AG04450 (cell line): ENCODE measurements at regions of chrX and their contacts with region 1.

Region 1: GRCh38 chrX:84729809-84730208 is 227.6 kb upstream of the HDX start:
- DNase-seq: no peak
- H3K4me3 ChIP-seq: no peak overlapping the region
- H3K27ac ChIP-seq: no peak overlapping the region
- H3K27me3 ChIP-seq: no peaks in the 10 kb centered on the region
- CTCF ChIP-seq: peak; percentile 79

Region 2: DNA sequence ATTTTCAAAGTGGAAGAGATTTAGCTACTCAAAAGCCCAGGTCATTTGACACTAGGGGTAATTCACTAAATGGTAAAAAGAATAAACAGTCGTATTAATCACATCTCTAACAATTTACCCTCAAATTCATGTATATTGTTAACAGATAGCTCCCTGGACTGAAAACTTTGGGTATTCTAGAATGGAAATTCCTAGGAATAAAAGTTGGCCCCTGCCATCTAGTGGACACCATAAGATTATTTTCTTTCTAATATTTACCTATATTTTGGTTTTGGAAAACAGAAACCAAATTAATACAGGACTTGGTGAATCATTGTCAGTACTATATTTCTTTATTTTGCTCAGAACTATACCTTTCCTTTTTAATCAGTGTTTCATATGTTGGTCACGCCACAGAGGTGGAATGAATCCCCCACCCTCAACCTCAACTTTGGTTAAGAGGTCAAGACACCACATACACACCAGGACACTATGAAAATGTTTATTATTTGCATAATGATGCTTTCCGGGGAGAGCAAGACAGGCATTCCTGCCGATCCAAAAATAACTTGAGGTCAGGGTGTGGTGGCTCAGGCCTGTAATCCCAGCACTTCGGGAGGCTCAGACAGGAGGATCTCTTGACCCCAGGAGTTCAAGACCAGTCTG is 177.6 kb after region 1 on chrX:
- CTCF ChIA-PET with region 1: interaction called, 27 read pairs
- POLR2A ChIA-PET with region 1: no interaction called
- DNase-seq: no peak
- H3K4me3 ChIP-seq: no peak overlapping the region
- H3K27ac ChIP-seq: no peak overlapping the region
- H3K27me3 ChIP-seq: no peaks in the 10 kb centered on the region
- CTCF ChIP-seq: peak; percentile 34

Region 3: GRCh38 chrX:85052636-85053343 is 323.0 kb after region 1 on chrX:
- CTCF ChIA-PET with region 1: interaction called, 20 read pairs
- POLR2A ChIA-PET with region 1: no interaction called
- DNase-seq: peak; percentile 42
- H3K4me3 ChIP-seq: no peak overlapping the region
- H3K27ac ChIP-seq: no peak overlapping the region
- H3K27me3 ChIP-seq: no peaks in the 10 kb centered on the region
- CTCF ChIP-seq: peak; percentile 32; the same call in 1 of the 2 replicates